ENCODE measurements at regions of chr2 and their contacts with region 1.

Region 1: GRCh38 chr2:120656273-120656950 is 79.3 kb upstream of the GLI2 start:
- DNase-seq: no peak
- ATAC-seq: no peak

Region 2: DNA sequence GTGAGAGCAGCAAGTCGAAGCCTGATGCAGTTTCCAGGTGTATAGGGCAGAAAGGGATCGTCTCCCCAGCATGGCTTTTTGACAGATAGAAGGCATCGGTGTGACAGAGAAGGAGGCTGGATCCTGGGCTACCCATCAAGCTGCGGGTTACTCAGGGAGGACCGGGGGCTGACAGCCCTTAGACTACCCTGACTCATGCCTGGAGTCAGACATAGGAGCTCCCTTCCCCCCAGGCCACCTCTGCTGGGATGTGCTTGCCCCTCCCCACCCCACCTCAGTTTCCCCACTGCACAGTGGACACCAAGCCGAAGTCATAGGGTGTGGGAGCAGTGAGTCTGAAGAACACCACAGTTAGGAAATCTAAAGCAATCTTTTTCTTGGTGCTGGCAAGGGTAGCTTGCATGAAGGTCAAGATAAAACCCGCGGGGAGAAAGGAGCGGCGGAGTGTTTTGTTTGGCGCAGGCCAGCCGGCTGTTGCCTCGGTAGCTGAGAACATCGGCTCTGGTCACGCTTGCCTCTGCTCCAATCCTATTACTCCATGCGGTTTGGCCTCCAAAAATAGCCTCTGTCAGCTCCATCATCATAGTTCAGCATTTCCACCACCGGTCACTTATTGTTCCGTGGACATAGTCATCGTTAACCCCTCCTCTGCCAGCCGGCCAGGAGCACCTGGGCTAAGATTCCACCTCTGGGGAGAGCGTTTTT is 89.9 kb before region 1 on chr2:
- intact Hi-C with region 1: loop called in 1 of 2 experiments (anchors 10 kb)
- DNase-seq: peak; percentile 90
- ATAC-seq: peak; percentile 94 to 95

Measured in left cardiac atrium (tissue), 4 donors.